ENCODE measurements at regions of chr5 and their contacts with region 1.

Region 1: DNA sequence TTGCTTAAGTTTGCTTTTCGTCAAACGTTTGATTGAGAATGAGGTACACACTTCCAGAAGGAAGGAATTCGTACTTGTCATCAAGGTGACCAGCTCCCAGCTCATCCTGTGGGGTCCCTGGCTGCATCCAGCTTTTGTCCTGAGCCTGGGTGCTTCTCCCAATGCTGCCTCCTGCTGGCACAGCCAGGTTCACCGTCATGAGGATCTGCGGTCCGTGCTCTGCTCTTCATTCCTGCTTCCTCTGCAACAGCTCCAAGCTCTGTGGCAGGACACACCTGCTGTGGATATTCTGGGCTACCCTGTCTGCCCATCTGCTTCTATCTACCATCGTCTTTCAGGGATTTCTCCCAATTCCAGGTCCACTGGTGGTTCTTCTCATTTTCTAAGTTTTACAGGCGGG is 13.3 kb upstream of the UBE2QL1 start:
- DNase-seq: peak; percentile 56
- H3K4me3 ChIP-seq: no peak overlapping the region
- H3K27ac ChIP-seq: no peak overlapping the region
- H3K4me1 ChIP-seq: no peaks in the 10 kb centered on the region
- H3K27me3 ChIP-seq: peaks cover 11 to 12% of the 10 kb centered on the region in 2 experiments
- CTCF ChIP-seq: peak; percentile 64 to 82
- POLR2A ChIP-seq: no peak

Region 2: DNA sequence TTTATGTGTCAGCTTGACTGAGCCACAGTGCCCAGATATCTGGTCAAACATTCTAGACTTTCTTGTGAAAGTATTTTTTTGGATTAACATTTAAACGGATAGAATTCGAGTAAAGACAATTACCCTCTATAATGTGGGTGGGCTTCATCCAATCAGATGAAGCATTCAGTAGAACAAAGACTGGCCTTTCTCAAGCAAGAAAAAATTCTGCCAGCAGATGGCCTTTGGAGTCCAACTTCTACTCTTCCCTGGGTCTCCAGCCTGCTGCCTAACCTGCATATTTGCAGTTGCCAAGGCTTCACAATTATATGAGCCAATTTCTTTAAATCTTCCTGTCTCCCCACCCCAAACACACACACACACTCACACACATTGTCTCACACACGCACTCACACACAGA is 143.4 kb before region 1 on chr5:
- CTCF ChIA-PET with region 1: interaction called, 43 read pairs
- POLR2A ChIA-PET with region 1: no interaction called
- dilution Hi-C with region 1: no loop called
- intact Hi-C with region 1: loop called (anchors 1 kb)
- DNase-seq: peak; percentile 49
- H3K4me3 ChIP-seq: no peak overlapping the region
- H3K27ac ChIP-seq: no peak overlapping the region
- H3K4me1 ChIP-seq: no peaks in the 10 kb centered on the region
- H3K27me3 ChIP-seq: no peaks in the 10 kb centered on the region
- CTCF ChIP-seq: peak; percentile 20 to 43
- POLR2A ChIP-seq: no peak

Region 3: DNA sequence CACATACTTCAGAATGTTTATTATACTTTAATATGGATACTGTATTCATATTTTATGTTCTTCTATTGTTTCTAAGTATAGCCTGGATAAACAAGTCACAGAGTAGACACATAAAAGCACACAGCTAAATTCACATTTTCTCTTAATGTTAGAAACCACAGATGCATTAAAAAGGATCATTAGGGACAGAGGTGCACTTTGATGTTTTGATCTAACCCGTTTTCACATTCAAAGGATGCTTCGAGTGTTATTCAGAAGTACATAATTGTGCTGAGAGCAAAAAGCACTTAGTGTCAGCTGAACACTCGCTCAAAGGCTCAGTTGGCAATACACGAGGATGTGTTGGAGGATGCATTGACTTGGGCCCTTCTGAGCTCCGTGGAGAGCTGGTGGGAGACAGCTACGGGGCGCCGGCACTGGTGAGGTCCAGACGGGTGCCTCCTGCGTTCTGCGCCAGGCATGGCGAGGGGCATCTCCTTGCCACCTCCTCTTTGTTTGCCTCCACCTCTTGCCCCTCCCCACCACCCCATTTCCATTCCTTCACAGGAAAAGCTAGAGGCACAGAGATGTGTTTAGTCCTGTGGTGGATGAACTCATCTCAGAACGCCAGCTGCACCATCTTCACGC is 92.6 kb before region 1 on chr5:
- CTCF ChIA-PET with region 1: interaction called, 14 read pairs
- POLR2A ChIA-PET with region 1: no interaction called
- dilution Hi-C with region 1: no loop called
- intact Hi-C with region 1: no loop called
- DNase-seq: no peak
- H3K4me3 ChIP-seq: no peak overlapping the region
- H3K27ac ChIP-seq: no peak overlapping the region
- H3K4me1 ChIP-seq: no peaks in the 10 kb centered on the region
- H3K27me3 ChIP-seq: no peaks in the 10 kb centered on the region
- CTCF ChIP-seq: no peak
- POLR2A ChIP-seq: no peak

Region 4: GRCh38 chr5:6377905-6378765 is 57.2 kb before region 1 on chr5 and contains the start of gene MED10:
- CTCF ChIA-PET with region 1: interaction called, 24 read pairs
- POLR2A ChIA-PET with region 1: no interaction called
- dilution Hi-C with region 1: no loop called
- intact Hi-C with region 1: no loop called
- DNase-seq: peak; percentile 88
- H3K4me3 ChIP-seq: peak within 1 kb of the TSS; percentile 51 to 76 (median 71)
- H3K27ac ChIP-seq: peak within 1 kb of the TSS; percentile 86
- H3K4me1 ChIP-seq: peaks cover 28% of the 10 kb centered on the region
- H3K27me3 ChIP-seq: no peaks in the 10 kb centered on the region
- CTCF ChIP-seq: no peak
- POLR2A ChIP-seq: peak; percentile 87
- total RNA-seq, gene MED10: 55.6 and 57.8 TPM in 2 replicates

Region 5: DNA sequence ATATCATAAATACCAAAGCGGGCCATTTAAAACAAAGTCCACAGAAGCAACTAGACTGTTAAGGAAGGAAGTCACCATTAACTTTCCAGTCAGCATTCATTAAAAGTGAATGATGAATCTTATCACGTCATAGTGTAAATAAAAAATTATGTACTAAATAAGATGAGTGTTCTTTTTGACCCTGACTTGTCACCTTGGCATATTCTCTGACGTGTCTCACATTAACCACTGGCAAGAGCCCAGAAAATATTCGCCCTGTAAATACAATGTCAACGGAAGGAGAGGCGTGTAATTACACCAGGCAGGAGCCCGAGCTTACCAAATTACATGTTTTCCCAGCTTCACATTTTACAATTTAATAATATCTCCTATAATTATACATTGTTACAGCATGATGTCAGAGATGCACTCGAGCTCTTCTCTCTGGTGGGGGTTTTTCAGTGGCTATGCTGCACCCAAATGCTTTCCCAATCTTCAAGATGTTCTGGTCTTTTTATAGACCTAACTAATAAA is 16.0 kb before region 1 on chr5:
- CTCF ChIA-PET with region 1: interaction called, 48 read pairs
- POLR2A ChIA-PET with region 1: no interaction called
- dilution Hi-C with region 1: no loop called
- intact Hi-C with region 1: no loop called
- DNase-seq: peak; percentile 89
- H3K4me3 ChIP-seq: no peak overlapping the region
- H3K27ac ChIP-seq: peak overlapping the region; percentile 74
- H3K4me1 ChIP-seq: peaks cover 45% of the 10 kb centered on the region
- H3K27me3 ChIP-seq: no peaks in the 10 kb centered on the region
- CTCF ChIP-seq: no peak
- POLR2A ChIP-seq: no peak

Region 6: GRCh38 chr5:6448622-6449464 is 13.5 kb after region 1 on chr5 and contains the start of gene UBE2QL1:
- CTCF ChIA-PET with region 1: interaction called, 20 read pairs
- POLR2A ChIA-PET with region 1: no interaction called
- dilution Hi-C with region 1: no loop called
- intact Hi-C with region 1: no loop called
- DNase-seq: peak; percentile 24
- H3K4me3 ChIP-seq: no peak within 1 kb of the TSS
- H3K27ac ChIP-seq: no peak within 1 kb of the TSS
- H3K4me1 ChIP-seq: peaks cover 5% of the 10 kb centered on the region
- H3K27me3 ChIP-seq: peaks cover 27 to 32% of the 10 kb centered on the region in 2 experiments
- CTCF ChIP-seq: no peak
- POLR2A ChIP-seq: no peak
- total RNA-seq, gene UBE2QL1: 0.15 and 0.21 TPM in 2 replicates

Region 7: GRCh38 chr5:6459896-6460295 is 24.5 kb after region 1 on chr5:
- CTCF ChIA-PET with region 1: no interaction called
- POLR2A ChIA-PET with region 1: no interaction called
- dilution Hi-C with region 1: no loop called
- intact Hi-C with region 1: no loop called
- DNase-seq: no peak
- H3K4me3 ChIP-seq: no peak overlapping the region
- H3K27ac ChIP-seq: no peak overlapping the region
- H3K4me1 ChIP-seq: no peaks in the 10 kb centered on the region
- H3K27me3 ChIP-seq: no peaks in the 10 kb centered on the region
- CTCF ChIP-seq: no peak
- POLR2A ChIP-seq: no peak

Region 8: GRCh38 chr5:6979061-6979460 is 543.7 kb after region 1 on chr5:
- CTCF ChIA-PET with region 1: no interaction called
- POLR2A ChIA-PET with region 1: no interaction called
- dilution Hi-C with region 1: no loop called
- intact Hi-C with region 1: no loop called
- DNase-seq: no peak
- H3K4me3 ChIP-seq: no peak overlapping the region
- H3K27ac ChIP-seq: no peak overlapping the region
- H3K4me1 ChIP-seq: no peaks in the 10 kb centered on the region
- H3K27me3 ChIP-seq: no peaks in the 10 kb centered on the region
- CTCF ChIP-seq: no peak
- POLR2A ChIP-seq: no peak

Region 9: GRCh38 chr5:7678030-7678429 is 1242.7 kb after region 1 on chr5:
- CTCF ChIA-PET with region 1: no interaction called
- POLR2A ChIA-PET with region 1: no interaction called
- dilution Hi-C with region 1: no loop called
- intact Hi-C with region 1: no loop called
- DNase-seq: no peak
- H3K4me3 ChIP-seq: no peak overlapping the region
- H3K27ac ChIP-seq: no peak overlapping the region
- H3K4me1 ChIP-seq: no peaks in the 10 kb centered on the region
- H3K27me3 ChIP-seq: no peaks in the 10 kb centered on the region
- CTCF ChIP-seq: no peak
- POLR2A ChIP-seq: no peak